Dendritic cell treated with granulocyte-macrophage colony-stimulating factor and Interleukin-4, amounts not matched to agents 40 ng/mL and 50 ng/mL, for 4 days (primary cell): ENCODE measurements at regions of chr7 and their contacts with region 1.

Region 1: DNA sequence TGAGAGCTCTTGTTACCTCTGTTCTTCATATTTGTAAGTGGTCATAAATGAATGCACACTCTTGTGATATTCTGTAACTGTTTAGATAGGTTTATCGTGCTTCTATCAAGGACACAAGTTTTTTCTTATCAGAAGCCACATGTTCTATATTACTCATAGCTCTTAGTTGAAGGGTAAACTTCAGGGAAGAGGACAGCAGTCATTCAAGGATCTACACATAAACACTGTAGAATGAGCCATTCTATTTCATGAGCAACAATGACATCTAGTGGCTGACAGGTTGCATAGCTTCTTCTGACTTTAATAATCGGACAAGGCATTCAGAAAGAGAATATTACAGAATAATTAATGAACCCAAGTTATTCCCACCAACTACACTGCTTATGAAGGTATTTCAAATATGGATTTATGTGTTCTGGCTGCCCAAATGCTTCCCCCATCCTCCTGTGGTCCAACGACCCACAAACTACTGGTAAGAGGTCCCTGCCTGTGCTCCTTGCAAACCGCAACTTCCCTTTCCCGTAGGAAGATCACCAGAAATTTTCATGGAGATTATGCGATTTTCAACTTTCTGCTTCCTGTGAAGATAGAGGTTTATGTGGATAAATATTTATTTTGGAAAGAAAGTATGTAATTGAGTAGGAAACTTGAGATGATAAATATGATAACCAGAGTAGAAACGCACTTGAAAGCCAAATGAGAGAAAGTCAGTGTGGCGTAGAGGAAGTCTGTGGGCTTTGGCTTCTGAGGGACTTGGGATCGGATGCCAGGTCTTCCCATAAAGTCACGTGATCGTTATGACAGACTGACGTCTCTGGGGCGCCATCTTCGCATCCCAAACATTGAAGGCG is 16.8 kb upstream of the ABCB5 start:
- H3K4me3 Mint-ChIP-seq: peak overlapping the region; percentile 42
- H3K27ac Mint-ChIP-seq: no peak overlapping the region
- H3K4me1 Mint-ChIP-seq: peaks cover 21% of the 10 kb centered on the region
- H3K27me3 Mint-ChIP-seq: peaks cover 6% of the 10 kb centered on the region

Region 2: DNA sequence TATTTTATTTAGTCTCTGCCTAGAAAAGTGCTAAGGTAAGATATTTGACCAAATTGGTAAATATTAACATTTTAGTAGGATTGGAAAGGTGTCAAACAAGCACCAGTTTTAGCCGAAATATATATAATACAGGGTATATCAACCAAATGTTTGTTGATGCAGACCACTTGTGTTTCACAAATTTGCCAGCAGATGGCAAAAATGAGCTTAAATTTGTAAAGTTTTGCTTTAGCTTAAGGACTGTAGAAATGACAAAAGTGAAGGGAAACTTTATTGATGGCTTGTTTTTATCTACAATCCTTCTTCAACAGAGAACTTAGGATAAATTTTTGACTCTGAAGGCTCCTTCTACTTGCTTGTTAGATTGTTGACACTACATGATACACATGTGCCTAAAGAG is 885.0 kb before region 1 on chr7:
- intact Hi-C with region 1: loop called (anchors 1 kb)
- H3K4me3 Mint-ChIP-seq: no peak overlapping the region
- H3K27ac Mint-ChIP-seq: no peak overlapping the region
- H3K4me1 Mint-ChIP-seq: peaks cover 13% of the 10 kb centered on the region
- H3K27me3 Mint-ChIP-seq: peaks cover 2% of the 10 kb centered on the region

Region 3: DNA sequence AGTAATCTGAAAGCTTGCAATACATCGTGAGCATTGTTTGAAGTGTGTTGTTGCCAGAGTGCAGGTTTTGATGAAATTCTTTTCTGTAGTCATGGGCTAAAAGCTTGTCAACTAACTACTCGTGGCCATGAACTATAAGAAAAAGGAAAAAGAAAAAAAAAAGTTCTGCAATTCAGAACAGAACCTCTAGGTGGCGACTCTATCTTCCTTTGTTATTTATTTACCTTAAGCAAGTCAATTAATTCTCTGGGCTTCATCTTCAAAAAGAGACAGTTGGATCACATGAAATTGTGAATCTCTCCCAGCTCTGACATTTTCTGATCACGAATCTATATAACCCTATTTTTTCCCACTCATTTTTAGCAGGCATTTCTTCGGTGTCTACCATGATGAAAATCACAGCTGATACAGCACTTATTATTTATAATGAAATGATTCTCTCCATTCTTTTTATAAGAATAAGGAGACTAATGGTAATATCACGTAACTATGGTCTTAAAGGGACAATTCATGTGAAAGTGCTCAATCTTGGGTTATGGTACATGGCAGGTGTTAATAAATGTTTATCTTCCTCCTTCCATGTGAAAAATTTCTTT is 844.1 kb before region 1 on chr7:
- intact Hi-C with region 1: loop called (anchors 1 kb)
- H3K4me3 Mint-ChIP-seq: no peak overlapping the region
- H3K27ac Mint-ChIP-seq: no peak overlapping the region
- H3K4me1 Mint-ChIP-seq: no peaks in the 10 kb centered on the region
- H3K27me3 Mint-ChIP-seq: no peaks in the 10 kb centered on the region

Region 4: GRCh38 chr7:19982841-19983835 is 615.5 kb before region 1 on chr7:
- intact Hi-C with region 1: loop called (anchors 1 kb)
- H3K4me3 Mint-ChIP-seq: no peak overlapping the region
- H3K27ac Mint-ChIP-seq: no peak overlapping the region
- H3K4me1 Mint-ChIP-seq: no peaks in the 10 kb centered on the region
- H3K27me3 Mint-ChIP-seq: no peaks in the 10 kb centered on the region

Region 5: DNA sequence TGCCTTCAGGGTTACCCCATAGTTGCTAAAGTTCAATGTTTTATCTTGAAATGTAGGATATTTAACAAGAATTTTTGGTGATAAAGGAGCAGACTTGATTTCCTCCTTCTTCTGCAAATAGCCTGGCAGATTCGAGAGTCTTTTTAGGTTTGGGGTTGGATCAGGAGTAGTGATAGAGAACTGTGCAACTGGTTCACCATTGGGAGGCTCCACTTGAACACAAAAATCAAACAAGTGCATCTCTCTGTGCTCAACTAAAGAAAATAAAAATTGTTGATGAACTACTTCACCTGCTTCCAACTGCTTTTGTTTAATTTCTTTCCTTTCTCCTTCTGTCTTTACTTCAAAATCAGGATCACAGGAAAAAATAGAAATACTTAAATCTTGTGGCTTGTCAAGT is 440.0 kb before region 1 on chr7:
- intact Hi-C with region 1: loop called (anchors 2 kb)
- H3K4me3 Mint-ChIP-seq: no peak overlapping the region
- H3K27ac Mint-ChIP-seq: no peak overlapping the region
- H3K4me1 Mint-ChIP-seq: peaks cover 14% of the 10 kb centered on the region
- H3K27me3 Mint-ChIP-seq: no peaks in the 10 kb centered on the region

Region 6: DNA sequence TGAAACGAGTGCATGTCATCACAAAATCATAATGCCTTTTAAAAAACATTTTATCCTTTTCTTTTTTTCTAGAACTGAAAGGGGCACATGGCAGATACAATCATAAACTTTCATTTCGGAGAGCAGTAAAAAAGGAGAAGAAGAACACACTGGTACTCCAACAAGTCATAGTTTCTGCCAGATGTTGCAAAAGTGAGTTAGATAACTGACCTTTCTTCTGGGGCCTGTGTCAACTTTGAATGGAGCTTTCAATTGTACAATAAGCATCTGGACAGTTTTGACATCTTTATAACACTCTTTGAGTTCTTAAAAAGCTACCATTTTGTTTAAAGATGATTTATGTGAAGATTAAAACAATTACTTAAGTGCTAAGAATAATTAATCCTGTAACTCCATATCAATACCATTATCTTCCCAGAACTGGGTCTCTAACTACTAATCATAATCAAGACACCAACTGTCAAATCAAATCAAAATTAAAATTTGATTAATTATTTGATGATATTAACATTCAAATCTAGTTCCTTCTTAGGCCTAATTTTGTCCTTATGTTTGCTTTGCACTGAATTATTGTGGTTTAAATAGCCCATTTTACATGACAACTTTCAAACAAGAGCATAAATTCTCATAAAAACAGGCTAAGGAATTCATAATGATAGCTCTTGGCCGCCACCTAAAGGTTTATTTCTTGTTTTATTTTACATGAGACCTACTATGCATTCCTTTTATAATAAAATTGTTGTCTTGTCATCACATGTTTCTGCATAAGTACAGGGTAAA is 287.5 kb before region 1 on chr7:
- intact Hi-C with region 1: loop called (anchors 5 kb)
- H3K4me3 Mint-ChIP-seq: no peak overlapping the region
- H3K27ac Mint-ChIP-seq: no peak overlapping the region
- H3K4me1 Mint-ChIP-seq: peaks cover 11% of the 10 kb centered on the region
- H3K27me3 Mint-ChIP-seq: peaks cover 5% of the 10 kb centered on the region

Region 7: GRCh38 chr7:20330240-20330927 is 268.3 kb before region 1 on chr7 and contains the start of gene ITGB8:
- intact Hi-C with region 1: loop called (anchors 5 kb)
- H3K4me3 Mint-ChIP-seq: peak within 1 kb of the TSS; percentile 84
- H3K27ac Mint-ChIP-seq: peak within 1 kb of the TSS; percentile 80
- H3K4me1 Mint-ChIP-seq: peaks cover 25% of the 10 kb centered on the region
- H3K27me3 Mint-ChIP-seq: peaks cover 28% of the 10 kb centered on the region

Region 8: DNA sequence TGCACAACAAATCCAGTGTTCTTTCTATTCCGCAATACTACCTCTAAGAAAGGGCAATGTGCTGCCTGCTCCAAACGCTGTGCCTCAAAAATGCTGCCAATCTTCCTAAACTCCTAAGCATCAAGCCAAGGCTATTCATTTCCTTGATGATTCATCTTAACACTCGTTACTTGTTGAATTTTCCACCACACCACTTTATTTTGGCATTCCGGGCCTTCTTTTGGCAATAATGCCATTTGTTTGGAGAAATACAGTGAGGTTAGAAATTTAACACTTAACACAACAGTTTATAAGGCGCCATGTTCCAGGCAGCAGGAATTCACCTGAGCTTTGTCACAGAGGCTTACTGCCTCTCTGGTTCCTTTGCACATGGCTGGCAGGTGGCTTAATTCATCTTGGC is 65.8 kb before region 1 on chr7:
- intact Hi-C with region 1: no loop called
- H3K4me3 Mint-ChIP-seq: no peak overlapping the region
- H3K27ac Mint-ChIP-seq: no peak overlapping the region
- H3K4me1 Mint-ChIP-seq: no peaks in the 10 kb centered on the region
- H3K27me3 Mint-ChIP-seq: no peaks in the 10 kb centered on the region

Region 9: GRCh38 chr7:20558963-20559716 is 39.5 kb before region 1 on chr7:
- intact Hi-C with region 1: no loop called
- H3K4me3 Mint-ChIP-seq: no peak overlapping the region
- H3K27ac Mint-ChIP-seq: no peak overlapping the region
- H3K4me1 Mint-ChIP-seq: peaks cover 5% of the 10 kb centered on the region
- H3K27me3 Mint-ChIP-seq: no peaks in the 10 kb centered on the region

Region 10: GRCh38 chr7:20624666-20625385 is 26.1 kb after region 1 on chr7:
- intact Hi-C with region 1: no loop called
- H3K4me3 Mint-ChIP-seq: no peak overlapping the region
- H3K27ac Mint-ChIP-seq: no peak overlapping the region
- H3K4me1 Mint-ChIP-seq: no peaks in the 10 kb centered on the region
- H3K27me3 Mint-ChIP-seq: no peaks in the 10 kb centered on the region

Region 11: GRCh38 chr7:20708896-20709295 is 110.2 kb after region 1 on chr7:
- intact Hi-C with region 1: no loop called
- H3K4me3 Mint-ChIP-seq: no peak overlapping the region
- H3K27ac Mint-ChIP-seq: no peak overlapping the region
- H3K4me1 Mint-ChIP-seq: no peaks in the 10 kb centered on the region
- H3K27me3 Mint-ChIP-seq: no peaks in the 10 kb centered on the region